ENCODE measurements at regions of chr17 and their contacts with region 1.

Region 1: DNA sequence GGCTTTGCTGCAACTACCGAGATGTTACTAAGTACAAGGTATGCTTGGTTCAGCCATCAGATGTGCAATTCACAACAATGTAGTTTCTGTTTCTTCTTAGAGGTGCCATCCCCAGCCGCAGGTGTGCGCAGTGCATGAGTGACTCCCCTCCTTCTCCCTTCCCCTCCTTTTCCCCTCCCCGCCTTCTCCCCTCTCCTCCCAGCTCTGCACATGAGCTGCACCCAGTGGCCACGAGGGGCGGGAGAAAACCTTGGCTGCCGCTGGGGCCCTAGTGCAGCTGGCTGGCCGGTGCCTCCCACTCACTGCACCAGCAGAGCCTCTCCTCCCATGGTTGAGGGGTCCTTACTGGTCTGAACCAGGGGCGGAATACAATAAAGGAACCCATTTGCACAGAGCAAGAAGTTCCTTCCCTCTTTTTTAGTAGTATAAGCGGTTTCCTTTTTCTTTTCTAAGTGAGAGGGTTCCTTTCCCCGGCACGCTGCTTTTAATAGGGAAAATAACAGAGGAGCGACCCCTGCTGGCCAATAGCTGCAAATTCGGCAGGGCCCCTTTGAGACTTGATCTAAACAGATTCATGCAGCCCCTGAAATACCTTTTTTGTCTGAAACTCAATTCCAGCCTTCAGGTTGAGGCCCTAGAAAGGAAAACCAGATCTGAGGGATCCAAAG is 7.8 kb upstream of the CCL15 start:
- DNase-seq: no peak
- ATAC-seq: peak; percentile 77
- H3K4me3 ChIP-seq: no peak overlapping the region; the same call in 1 of the 2 replicates
- H3K27ac ChIP-seq: no peak overlapping the region
- H3K4me1 ChIP-seq: no peaks in the 10 kb centered on the region
- H3K27me3 ChIP-seq: no peaks in the 10 kb centered on the region
- CTCF ChIP-seq: peak; percentile 4 to 51 (median 47); a peak in 4 of 6 replicates
- EP300 ChIP-seq: no peak
- POLR2A ChIP-seq: no peak
- RAD21 ChIP-seq: no peak

Region 2: DNA sequence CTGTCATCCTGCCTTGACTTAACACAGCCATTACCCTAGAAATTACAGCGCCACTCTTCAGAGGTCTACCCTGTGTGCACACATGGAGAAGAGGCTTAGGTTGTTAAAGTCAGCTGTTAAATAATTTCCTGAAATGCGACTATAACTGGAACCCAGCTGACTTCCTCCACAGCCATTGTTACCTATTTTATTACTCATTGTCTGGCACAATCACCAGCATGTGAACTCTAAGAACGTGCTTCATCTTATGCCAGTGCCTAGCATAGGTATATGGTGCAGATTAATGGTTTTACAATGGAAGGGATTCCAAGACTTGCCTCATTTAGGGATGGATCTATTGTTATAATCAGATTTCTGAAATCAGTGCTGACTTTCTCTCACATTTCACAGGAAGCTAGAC is 90.5 kb before region 1 on chr17:
- CTCF ChIA-PET with region 1: no interaction called
- POLR2A ChIA-PET with region 1: no interaction called
- RAD21 ChIA-PET with region 1: no interaction called
- SMC1A ChIA-PET with region 1: no interaction called
- in situ Hi-C with region 1: no loop called
- intact Hi-C with region 1: no loop called
- DNase-seq: no peak
- ATAC-seq: no peak
- H3K4me3 ChIP-seq: no peak overlapping the region
- H3K27ac ChIP-seq: no peak overlapping the region
- H3K4me1 ChIP-seq: no peaks in the 10 kb centered on the region
- H3K27me3 ChIP-seq: no peaks in the 10 kb centered on the region
- CTCF ChIP-seq: no peak
- EP300 ChIP-seq: no peak
- POLR2A ChIP-seq: no peak
- RAD21 ChIP-seq: no peak

Region 3: DNA sequence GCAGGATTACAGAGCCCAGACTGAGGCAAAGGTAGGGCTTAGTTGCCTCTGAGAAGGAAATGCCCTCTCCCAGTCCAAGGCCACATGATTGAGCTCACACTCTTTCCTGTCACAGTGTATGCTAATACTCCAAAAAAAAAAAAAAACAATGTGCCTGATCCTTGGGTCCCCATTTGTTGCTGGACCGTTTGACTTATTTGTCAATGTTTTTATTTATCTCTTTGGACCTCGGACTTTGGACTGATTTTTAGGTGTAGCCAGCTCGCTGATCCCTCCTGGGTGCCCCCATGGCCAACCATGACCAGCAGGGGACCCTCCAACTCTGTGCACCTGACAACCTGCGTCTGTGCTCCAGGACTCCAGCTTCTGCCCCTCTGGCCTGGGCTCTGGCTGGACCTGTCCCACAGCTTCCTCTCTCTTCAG is 27.2 kb before region 1 on chr17:
- CTCF ChIA-PET with region 1: interaction called, 24 read pairs
- POLR2A ChIA-PET with region 1: no interaction called
- RAD21 ChIA-PET with region 1: interaction called, 16 read pairs
- SMC1A ChIA-PET with region 1: interaction called, 18 read pairs
- in situ Hi-C with region 1: no loop called
- intact Hi-C with region 1: no loop called
- DNase-seq: no peak
- ATAC-seq: peak; percentile 49
- H3K4me3 ChIP-seq: no peak overlapping the region
- H3K27ac ChIP-seq: no peak overlapping the region
- H3K4me1 ChIP-seq: peaks cover 6% of the 10 kb centered on the region; the same call in 1 of the 2 replicates
- H3K27me3 ChIP-seq: no peaks in the 10 kb centered on the region
- CTCF ChIP-seq: peak; percentile 36 to 46 (median 39); a peak in 5 of 6 replicates
- EP300 ChIP-seq: no peak
- POLR2A ChIP-seq: no peak
- RAD21 ChIP-seq: peak; percentile 71

Region 4: GRCh38 chr17:35991075-35991474 is 18.1 kb before region 1 on chr17:
- CTCF ChIA-PET with region 1: interaction called, 12 read pairs
- POLR2A ChIA-PET with region 1: no interaction called
- RAD21 ChIA-PET with region 1: no interaction called
- SMC1A ChIA-PET with region 1: interaction called, 10 read pairs
- in situ Hi-C with region 1: no loop called
- intact Hi-C with region 1: no loop called
- DNase-seq: no peak
- ATAC-seq: no peak
- H3K4me3 ChIP-seq: no peak overlapping the region
- H3K27ac ChIP-seq: no peak overlapping the region
- H3K4me1 ChIP-seq: no peaks in the 10 kb centered on the region
- H3K27me3 ChIP-seq: no peaks in the 10 kb centered on the region
- CTCF ChIP-seq: no peak
- EP300 ChIP-seq: no peak
- POLR2A ChIP-seq: no peak
- RAD21 ChIP-seq: no peak